Mammary epithelial cell (primary cell): ENCODE measurements at regions of chr2 and their contacts with region 1.

Region 1: GRCh38 chr2:25673300-25674076 is at the start of gene DTNB:
- DNase-seq: peak; percentile 89
- H3K4me3 ChIP-seq: peak within 1 kb of the TSS; percentile 79 to 93 (median 85)
- H3K27ac ChIP-seq: peak within 1 kb of the TSS; percentile 67
- H3K4me1 ChIP-seq: peaks cover 24% of the 10 kb centered on the region
- H3K27me3 ChIP-seq: no peaks in the 10 kb centered on the region
- CTCF ChIP-seq: no peak
- total RNA-seq, gene DTNB: 38.8 to 42.9 TPM

Region 2: DNA sequence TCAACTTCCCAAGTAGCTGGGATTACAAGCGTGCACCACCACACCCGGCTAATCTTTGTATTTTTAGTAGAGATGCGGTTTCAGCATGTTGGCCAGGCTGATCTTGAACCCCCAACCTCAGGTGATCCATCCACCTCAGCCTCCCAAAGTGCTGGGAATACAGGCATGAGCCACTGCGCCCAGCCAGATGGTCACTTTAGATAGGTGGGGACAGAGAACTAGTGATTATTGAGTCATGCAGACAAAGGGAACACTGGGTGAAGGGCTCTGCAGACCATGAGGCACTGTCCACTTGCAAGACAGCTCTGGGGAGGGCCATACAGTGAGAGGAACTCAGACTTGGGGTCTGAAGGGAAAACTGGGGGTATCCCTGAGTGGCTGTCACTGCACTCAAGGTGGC is 446.7 kb before region 1 on chr2:
- CTCF ChIA-PET with region 1: no interaction called
- dilution Hi-C with region 1: no loop called
- in situ Hi-C with region 1: no loop called
- intact Hi-C with region 1: no loop called
- DNase-seq: no peak
- H3K4me3 ChIP-seq: no peak overlapping the region
- H3K27ac ChIP-seq: no peak overlapping the region
- H3K4me1 ChIP-seq: peaks cover 3% of the 10 kb centered on the region
- H3K27me3 ChIP-seq: no peaks in the 10 kb centered on the region
- CTCF ChIP-seq: no peak

Region 3: DNA sequence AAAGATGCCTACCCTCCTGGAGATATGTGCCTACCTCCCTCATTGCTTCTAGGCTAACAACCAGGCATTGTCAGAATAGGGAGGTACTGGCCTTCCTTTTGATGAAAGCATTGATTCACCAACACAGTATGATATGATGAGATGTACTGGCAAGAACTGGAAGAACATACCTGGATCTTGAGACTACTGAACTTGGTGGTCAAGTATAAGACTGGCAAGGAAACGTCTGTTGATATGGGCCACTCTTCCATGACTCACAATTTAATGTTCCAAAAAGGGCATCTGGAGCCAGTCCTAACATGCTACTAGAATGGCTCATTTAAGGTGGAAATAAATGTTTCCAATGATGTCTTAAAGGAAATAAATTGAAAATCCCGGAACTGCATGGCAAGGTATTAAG is 18.2 kb before region 1 on chr2:
- CTCF ChIA-PET with region 1: no interaction called
- dilution Hi-C with region 1: no loop called
- in situ Hi-C with region 1: no loop called
- intact Hi-C with region 1: loop called (anchors 1 kb)
- DNase-seq: peak; percentile 92
- H3K4me3 ChIP-seq: no peak overlapping the region
- H3K27ac ChIP-seq: peak overlapping the region; percentile 50
- H3K4me1 ChIP-seq: peaks cover 60% of the 10 kb centered on the region
- H3K27me3 ChIP-seq: no peaks in the 10 kb centered on the region
- CTCF ChIP-seq: no peak

Region 4: DNA sequence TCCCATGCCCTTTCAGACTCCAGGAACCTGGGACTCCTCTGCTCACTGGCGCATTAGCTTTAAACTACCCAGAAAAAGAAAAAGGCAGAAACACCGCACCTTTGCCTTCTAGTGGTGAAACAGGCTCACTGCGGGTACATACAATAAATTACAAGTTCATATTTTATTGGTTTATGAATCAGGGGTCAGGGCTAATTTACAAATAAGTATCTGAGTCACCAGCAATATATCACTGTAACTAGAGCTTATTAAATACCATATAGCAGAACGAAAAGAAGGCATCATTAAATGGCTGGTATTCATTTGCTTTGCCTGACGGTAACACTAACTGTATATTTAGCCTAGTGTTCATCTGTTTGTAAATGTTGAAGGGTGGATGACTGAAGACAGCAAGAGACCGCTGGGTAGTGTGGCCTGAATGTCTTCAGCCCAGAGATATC is 26.8 kb after region 1 on chr2:
- CTCF ChIA-PET with region 1: no interaction called
- dilution Hi-C with region 1: no loop called
- in situ Hi-C with region 1: no loop called
- intact Hi-C with region 1: loop called (anchors 1 kb)
- DNase-seq: peak; percentile 78
- H3K4me3 ChIP-seq: no peak overlapping the region
- H3K27ac ChIP-seq: no peak overlapping the region
- H3K4me1 ChIP-seq: peaks cover 15% of the 10 kb centered on the region
- H3K27me3 ChIP-seq: no peaks in the 10 kb centered on the region
- CTCF ChIP-seq: peak; percentile 84 to 93